Activated CD4-positive, alpha-beta memory T cell treated with anti-CD3 and anti-CD28 coated beads for 36 hours (primary cell): ENCODE measurements at regions of chr13 and their contacts with region 1.

Region 1: DNA sequence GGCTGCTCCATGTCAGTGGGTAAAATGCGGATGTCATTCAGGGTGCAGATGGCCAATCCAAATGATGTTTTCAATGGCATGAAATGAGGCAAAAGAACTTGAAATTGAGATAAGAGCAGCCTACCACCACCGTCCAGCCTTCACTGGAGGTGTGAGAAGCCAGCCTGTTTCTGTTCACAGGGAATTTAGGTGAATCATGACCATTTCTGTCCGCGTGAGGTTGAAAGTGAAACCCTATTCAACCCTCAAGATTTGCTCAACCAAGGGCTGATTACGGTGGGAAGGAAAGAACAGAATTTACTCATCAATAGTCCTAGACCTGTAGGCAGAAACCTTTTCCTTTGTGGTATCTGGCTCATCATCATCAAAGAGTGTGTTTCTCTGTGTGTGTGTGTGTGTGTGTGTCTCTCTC is 370.7 kb downstream of the COG6 start:
- DNase-seq: peak; percentile 82
- H3K4me3 Mint-ChIP-seq: peak overlapping the region; percentile 3
- H3K27ac Mint-ChIP-seq: peak overlapping the region; percentile 83
- H3K4me1 Mint-ChIP-seq: peaks cover 44% of the 10 kb centered on the region
- H3K27me3 Mint-ChIP-seq: peaks cover 5% of the 10 kb centered on the region

Region 2: GRCh38 chr13:39910833-39911232 is 115.3 kb before region 1 on chr13:
- CTCF ChIA-PET with region 1: no interaction called
- POLR2A ChIA-PET with region 1: no interaction called
- intact Hi-C with region 1: loop called (anchors 1 kb)
- DNase-seq: no peak
- H3K4me3 Mint-ChIP-seq: no peak overlapping the region
- H3K27ac Mint-ChIP-seq: no peak overlapping the region
- H3K4me1 Mint-ChIP-seq: peaks cover 9% of the 10 kb centered on the region
- H3K27me3 Mint-ChIP-seq: peaks cover 6% of the 10 kb centered on the region

Region 3: GRCh38 chr13:39952249-39953233 is 73.6 kb before region 1 on chr13:
- CTCF ChIA-PET with region 1: interaction called, 3 read pairs
- POLR2A ChIA-PET with region 1: no interaction called
- intact Hi-C with region 1: loop called (anchors 1 kb)
- DNase-seq: no peak
- H3K4me3 Mint-ChIP-seq: no peak overlapping the region
- H3K27ac Mint-ChIP-seq: no peak overlapping the region
- H3K4me1 Mint-ChIP-seq: peaks cover 44% of the 10 kb centered on the region
- H3K27me3 Mint-ChIP-seq: no peaks in the 10 kb centered on the region

Region 4: DNA sequence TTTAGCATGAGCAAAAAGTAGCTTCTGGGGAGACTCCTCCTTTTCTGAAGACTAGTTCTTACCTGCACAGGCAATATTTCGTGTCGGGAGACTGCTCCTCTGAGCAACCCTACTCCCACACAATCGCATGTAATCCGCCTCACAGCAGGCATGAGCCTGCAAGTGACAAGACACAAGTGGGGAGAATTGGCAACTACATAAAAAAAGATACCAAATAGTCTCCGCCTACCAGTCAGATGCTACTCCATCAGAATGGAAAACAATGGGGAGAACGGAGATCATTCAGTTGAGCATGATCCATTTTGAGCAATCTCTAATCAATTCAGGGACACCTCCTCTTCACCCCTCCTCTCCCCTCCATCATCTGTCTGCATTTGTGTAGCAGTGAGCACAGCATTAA is 49.7 kb before region 1 on chr13:
- CTCF ChIA-PET with region 1: no interaction called
- POLR2A ChIA-PET with region 1: no interaction called
- intact Hi-C with region 1: no loop called
- DNase-seq: no peak
- H3K4me3 Mint-ChIP-seq: no peak overlapping the region
- H3K27ac Mint-ChIP-seq: no peak overlapping the region
- H3K4me1 Mint-ChIP-seq: peaks cover 3% of the 10 kb centered on the region
- H3K27me3 Mint-ChIP-seq: no peaks in the 10 kb centered on the region

Region 5: GRCh38 chr13:40109356-40109844 is 83.2 kb after region 1 on chr13:
- CTCF ChIA-PET with region 1: no interaction called
- POLR2A ChIA-PET with region 1: no interaction called
- intact Hi-C with region 1: loop called (anchors 1 kb)
- DNase-seq: peak; percentile 51
- H3K4me3 Mint-ChIP-seq: no peak overlapping the region
- H3K27ac Mint-ChIP-seq: peak overlapping the region; percentile 18
- H3K4me1 Mint-ChIP-seq: peaks cover 33% of the 10 kb centered on the region
- H3K27me3 Mint-ChIP-seq: no peaks in the 10 kb centered on the region

Region 6: DNA sequence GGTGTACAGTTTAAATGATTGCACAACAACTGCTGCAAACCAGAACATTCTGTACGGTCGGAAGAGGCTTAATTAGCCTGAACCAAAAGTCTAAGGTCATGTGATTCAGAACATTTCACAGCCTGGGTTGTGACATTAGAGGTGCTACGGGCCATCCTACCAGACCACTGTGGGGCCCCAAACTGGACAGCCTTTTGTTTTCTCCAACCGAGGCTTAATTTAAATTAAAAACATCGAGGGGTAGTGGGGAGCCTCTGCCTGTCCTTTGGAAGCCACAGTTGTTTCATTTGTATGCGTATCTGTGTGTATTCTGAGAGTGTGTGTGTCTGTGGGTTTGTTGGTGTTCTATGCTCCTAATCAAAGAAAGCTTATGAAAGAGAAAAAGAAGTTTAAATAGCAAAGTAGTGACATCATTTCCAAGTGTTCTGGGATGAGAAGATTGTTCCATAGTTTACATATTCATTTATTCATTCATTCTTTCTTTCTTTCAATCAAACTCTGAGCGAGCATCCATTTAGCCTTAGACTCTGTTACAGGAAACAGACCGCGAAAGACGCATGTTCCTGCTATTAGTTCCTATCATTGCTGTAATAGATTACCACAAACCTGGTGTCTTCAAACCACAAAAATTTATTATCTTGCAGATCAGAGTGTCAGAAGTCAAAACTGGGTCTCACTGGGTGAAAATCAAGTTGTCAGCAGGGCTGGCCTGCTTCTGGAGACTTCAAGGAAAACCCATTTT is 195.5 kb after region 1 on chr13:
- CTCF ChIA-PET with region 1: no interaction called
- POLR2A ChIA-PET with region 1: interaction called, 3 read pairs
- intact Hi-C with region 1: loop called (anchors 2 kb)
- DNase-seq: peak; percentile 54
- H3K4me3 Mint-ChIP-seq: peak overlapping the region; percentile 30
- H3K27ac Mint-ChIP-seq: peak overlapping the region; percentile 74
- H3K4me1 Mint-ChIP-seq: peaks cover 63% of the 10 kb centered on the region
- H3K27me3 Mint-ChIP-seq: no peaks in the 10 kb centered on the region

Region 7: DNA sequence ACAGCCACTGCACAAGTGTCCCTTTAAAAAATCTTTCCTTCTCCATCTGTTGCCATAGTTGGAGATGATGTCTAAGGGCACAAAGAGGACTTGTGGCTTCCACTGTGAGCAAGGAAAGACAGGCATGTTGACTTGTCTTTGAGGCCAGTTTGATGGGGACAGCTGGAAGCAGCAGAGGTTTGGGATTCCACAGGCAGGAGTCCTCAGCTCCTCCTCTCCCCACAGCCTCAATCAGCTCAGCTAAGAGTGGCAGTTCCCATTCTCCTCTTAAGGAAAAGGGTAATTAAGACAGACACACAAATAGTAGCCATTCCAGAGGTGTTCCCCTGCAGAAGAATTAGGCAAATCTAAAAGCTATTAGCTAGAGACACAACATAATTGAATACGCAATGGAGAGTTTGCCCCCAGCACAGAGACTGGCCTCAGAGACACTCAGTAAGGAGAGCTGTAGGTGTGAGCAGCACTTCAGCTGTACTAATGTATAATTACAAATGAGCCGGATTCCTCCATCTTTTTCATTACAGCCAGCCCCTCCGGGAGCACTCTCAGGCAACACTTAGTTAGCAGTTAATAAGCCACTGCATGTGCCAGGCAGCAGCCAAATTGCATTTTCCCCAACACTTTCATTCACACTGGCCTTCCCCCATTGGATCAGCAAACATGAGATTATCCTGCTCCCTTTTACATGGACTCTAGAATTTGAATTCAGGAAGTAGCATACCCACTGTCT is 206.3 kb after region 1 on chr13:
- CTCF ChIA-PET with region 1: no interaction called
- POLR2A ChIA-PET with region 1: no interaction called
- intact Hi-C with region 1: no loop called
- DNase-seq: no peak
- H3K4me3 Mint-ChIP-seq: no peak overlapping the region
- H3K27ac Mint-ChIP-seq: no peak overlapping the region
- H3K4me1 Mint-ChIP-seq: peaks cover 21% of the 10 kb centered on the region
- H3K27me3 Mint-ChIP-seq: no peaks in the 10 kb centered on the region

Region 8: GRCh38 chr13:40597740-40598370 is 571.7 kb after region 1 on chr13:
- CTCF ChIA-PET with region 1: no interaction called
- POLR2A ChIA-PET with region 1: no interaction called
- intact Hi-C with region 1: loop called (anchors 5 kb)
- DNase-seq: peak; percentile 24
- H3K4me3 Mint-ChIP-seq: peak overlapping the region; percentile 39
- H3K27ac Mint-ChIP-seq: peak overlapping the region; percentile 85
- H3K4me1 Mint-ChIP-seq: peaks cover 87% of the 10 kb centered on the region
- H3K27me3 Mint-ChIP-seq: no peaks in the 10 kb centered on the region